Lower leg skin (tissue), 4 donors: ENCODE measurements at regions of chr3 and their contacts with region 1.

Region 1: DNA sequence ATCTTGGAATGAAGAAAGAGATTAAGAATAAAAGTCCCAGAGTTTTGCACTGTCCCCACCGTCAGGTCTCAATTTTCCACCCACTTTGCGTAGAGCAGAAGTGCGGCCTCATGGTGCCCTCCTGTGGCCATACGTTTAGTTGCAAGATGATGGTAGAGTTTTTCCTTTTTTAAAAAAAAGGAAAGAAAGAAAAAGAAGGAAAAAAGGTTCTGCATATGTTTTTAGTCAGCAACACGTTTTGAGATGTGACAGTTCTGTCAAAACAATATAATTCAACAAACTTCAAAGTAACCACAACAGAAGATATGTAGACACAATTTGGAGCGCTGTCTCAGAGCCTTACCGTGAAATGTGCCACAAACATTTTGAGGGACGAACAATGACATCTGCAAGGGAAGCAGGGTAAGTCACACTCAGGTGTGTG is 24.6 kb downstream of the EBLN2 start:
- DNase-seq: peak in 1 of 2 donors; percentile 85
- H3K4me3 ChIP-seq: no peak overlapping the region
- CTCF ChIP-seq: peak in 1 of 3 donors; percentile 56
- POLR2A ChIP-seq: no peak

Region 2: GRCh38 chr3:72288955-72289691 is 797.0 kb before region 1 on chr3:
- intact Hi-C with region 1: no loop called
- DNase-seq: peak; percentile 68 to 87
- H3K4me3 ChIP-seq: no peak overlapping the region
- CTCF ChIP-seq: no peak
- POLR2A ChIP-seq: no peak

Region 3: DNA sequence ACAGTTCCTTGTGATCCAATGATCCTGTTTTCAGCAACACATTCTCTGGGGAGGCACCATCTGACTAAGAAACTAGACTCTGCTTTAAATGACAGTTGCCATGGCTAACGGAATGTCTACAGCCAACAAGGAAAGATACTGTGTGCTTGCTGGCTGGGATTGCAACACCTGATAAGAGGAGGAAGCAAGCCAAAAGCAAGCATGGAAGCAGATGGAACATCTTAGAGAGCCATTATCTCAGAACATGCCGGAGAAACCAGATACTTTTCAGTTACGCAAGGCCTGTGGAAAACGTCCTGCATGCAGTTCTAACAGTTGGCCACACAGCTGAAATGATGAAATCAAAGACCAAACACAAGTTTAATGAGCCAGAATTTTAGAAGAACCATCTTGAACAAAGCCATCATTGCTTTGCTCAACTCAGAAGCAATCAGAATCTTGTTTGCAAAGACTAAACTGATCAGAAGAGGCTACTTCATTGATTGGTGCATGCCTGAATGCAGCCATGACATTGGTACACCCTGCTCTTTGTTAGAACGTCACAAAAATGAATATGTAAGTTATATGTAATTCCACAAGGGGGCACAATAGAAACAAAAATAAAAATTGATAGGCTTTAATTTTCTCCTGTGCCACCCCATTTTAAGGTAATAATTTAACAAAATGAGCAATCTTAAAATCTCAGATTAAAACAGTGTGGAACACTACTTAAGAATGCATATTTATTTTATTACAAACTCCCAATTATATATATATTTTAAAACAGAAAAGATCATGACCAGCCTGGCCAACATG is 147.4 kb before region 1 on chr3:
- intact Hi-C with region 1: loop called (anchors 10 kb)
- DNase-seq: peak; percentile 73 to 85
- H3K4me3 ChIP-seq: no peak overlapping the region
- CTCF ChIP-seq: no peak
- POLR2A ChIP-seq: no peak